ENCODE measurements at regions of chr16 and their contacts with region 1.

Region 1: GRCh38 chr16:66728117-66728787 is 23.2 kb downstream of the DYNC1LI2 start:
- DNase-seq: peak in 1 of 2 experiments; percentile 48
- H3K4me3 ChIP-seq: no peak overlapping the region
- H3K27ac ChIP-seq: no peak overlapping the region
- H3K4me1 ChIP-seq: no peaks in the 10 kb centered on the region
- H3K27me3 ChIP-seq: no peaks in the 10 kb centered on the region
- CTCF ChIP-seq: peak; percentile 82

Region 2: DNA sequence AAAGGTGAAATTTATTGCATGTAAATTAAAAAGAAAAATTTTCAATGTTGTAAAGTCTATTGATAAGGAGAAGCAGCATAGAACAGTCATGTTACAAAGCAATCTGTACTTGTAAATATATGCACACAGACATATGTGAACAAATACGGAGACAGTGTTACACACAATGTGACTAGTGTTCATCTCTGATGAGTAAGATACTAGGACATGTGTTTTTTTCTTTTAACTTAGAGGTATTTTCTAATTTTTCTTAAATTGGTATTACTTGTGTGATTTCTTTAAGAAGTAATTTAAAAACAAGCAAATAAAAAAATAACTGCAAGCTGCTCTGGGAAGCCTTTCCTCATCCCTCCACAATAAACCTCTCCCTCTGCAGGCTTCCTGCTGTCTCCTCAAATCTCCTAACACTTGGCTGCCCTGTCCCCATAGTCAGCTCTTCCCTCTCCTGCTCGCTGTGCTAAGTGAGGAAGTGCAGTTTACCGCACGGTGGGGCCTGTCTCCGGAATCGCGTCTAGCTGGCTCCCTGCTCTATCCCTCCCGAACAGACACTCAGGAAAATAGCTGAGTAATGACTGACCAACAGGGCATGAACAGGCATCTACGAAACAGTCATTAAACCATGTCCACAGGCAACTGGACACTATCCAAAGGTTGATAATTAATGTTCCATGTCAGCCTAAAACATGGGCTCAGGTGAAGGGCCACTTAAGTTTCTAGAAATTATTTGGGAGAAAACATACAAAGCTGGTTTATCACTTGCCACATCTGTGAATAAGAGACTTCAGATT is 67.6 kb before region 1 on chr16:
- CTCF ChIA-PET with region 1: no interaction called
- POLR2A ChIA-PET with region 1: no interaction called
- intact Hi-C with region 1: loop called (anchors 5 kb)
- DNase-seq: peak in 1 of 2 experiments; percentile 69
- H3K4me3 ChIP-seq: no peak overlapping the region
- H3K27ac ChIP-seq: peak overlapping the region; percentile 49; the same call in 1 of the 2 replicates
- H3K4me1 ChIP-seq: no peaks in the 10 kb centered on the region
- H3K27me3 ChIP-seq: no peaks in the 10 kb centered on the region
- CTCF ChIP-seq: no peak

Region 3: GRCh38 chr16:67017810-67018488 is 289.7 kb after region 1 on chr16:
- CTCF ChIA-PET with region 1: no interaction called
- POLR2A ChIA-PET with region 1: no interaction called
- intact Hi-C with region 1: no loop called
- DNase-seq: peak; percentile 86 to 88
- H3K4me3 ChIP-seq: no peak overlapping the region
- H3K27ac ChIP-seq: no peak overlapping the region
- H3K4me1 ChIP-seq: peaks cover 7% of the 10 kb centered on the region
- H3K27me3 ChIP-seq: peaks cover 19% of the 10 kb centered on the region
- CTCF ChIP-seq: peak; percentile 85

Measured in PC-9 (cell line).